MCF 10A (cell line): ENCODE measurements at regions of chrX and their contacts with region 1.

Region 1: GRCh38 chrX:21745756-21746155 is 12.2 kb downstream of the SMPX start:
- DNase-seq: peak; percentile 47
- H3K4me3 Mint-ChIP-seq: no peak overlapping the region
- H3K27ac Mint-ChIP-seq: no peak overlapping the region
- H3K4me1 Mint-ChIP-seq: no peaks in the 10 kb centered on the region
- H3K27me3 Mint-ChIP-seq: peaks cover 72% of the 10 kb centered on the region
- CTCF ChIP-seq: peak; percentile 46

Region 2: GRCh38 chrX:21756785-21757529 is 11.2 kb after region 1 on chrX:
- CTCF ChIA-PET with region 1: interaction called, 15 read pairs
- POLR2A ChIA-PET with region 1: no interaction called
- intact Hi-C with region 1: no loop called
- DNase-seq: no peak
- H3K4me3 Mint-ChIP-seq: no peak overlapping the region
- H3K27ac Mint-ChIP-seq: no peak overlapping the region
- H3K4me1 Mint-ChIP-seq: no peaks in the 10 kb centered on the region
- H3K27me3 Mint-ChIP-seq: peaks cover 30% of the 10 kb centered on the region
- CTCF ChIP-seq: no peak

Region 3: GRCh38 chrX:21972721-21973120 is 227.0 kb after region 1 on chrX:
- CTCF ChIA-PET with region 1: no interaction called
- POLR2A ChIA-PET with region 1: no interaction called
- intact Hi-C with region 1: loop called (anchors 5 kb)
- DNase-seq: no peak
- H3K4me3 Mint-ChIP-seq: no peak overlapping the region
- H3K27ac Mint-ChIP-seq: no peak overlapping the region
- H3K4me1 Mint-ChIP-seq: peaks cover 6% of the 10 kb centered on the region
- H3K27me3 Mint-ChIP-seq: peaks cover 65% of the 10 kb centered on the region
- CTCF ChIP-seq: no peak